Esophagus muscularis mucosa (tissue), 4 donors: ENCODE measurements at regions of chr6 and their contacts with region 1.

Region 1: DNA sequence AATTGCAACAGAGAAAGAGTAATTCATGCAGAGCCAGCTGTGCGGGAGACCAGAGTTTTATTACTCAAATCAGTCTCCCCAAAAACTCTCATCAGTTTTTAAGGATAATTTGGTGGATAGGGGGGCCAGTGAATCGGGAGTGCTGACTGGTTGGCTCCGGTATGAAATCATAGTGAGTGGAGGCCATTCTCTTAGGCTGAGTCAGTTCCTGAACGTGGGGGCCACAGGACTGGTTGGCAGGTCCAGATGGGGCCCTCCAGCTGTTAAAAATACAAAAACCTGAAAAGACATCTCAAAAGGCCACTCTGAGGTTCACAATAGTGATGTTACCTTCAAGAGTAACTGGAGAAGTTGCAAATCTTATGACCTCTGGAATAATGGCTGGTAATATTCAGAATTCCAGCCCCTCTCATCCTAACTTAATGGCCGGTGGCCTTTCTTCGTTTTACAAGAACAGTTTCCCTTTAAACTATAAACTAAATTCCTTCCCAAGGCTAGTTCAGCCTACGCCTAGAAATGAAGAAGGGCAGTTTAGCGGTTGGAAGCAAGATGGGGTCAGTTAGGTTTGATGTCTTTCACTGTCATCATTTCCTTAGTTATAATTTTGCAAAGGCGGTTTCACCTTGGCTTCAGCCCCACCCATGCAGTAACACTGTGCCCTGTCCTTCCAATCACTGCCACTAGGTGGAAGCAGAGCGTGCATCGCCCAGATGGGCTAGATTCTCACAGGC is 6.8 kb upstream of the MICA start:
- DNase-seq: no peak
- H3K4me3 ChIP-seq: peak overlapping the region in 1 of 4 donors; percentile 5
- H3K27ac ChIP-seq: no peak overlapping the region
- H3K4me1 ChIP-seq: peaks cover 22 to 36% (median 33%) of the 10 kb centered on the region in 4 donors
- H3K27me3 ChIP-seq: no peaks in the 10 kb centered on the region
- CTCF ChIP-seq: peak; percentile 96 to 98 (median 96)
- EP300 ChIP-seq: no peak
- POLR2A ChIP-seq: no peak

Region 2: GRCh38 chr6:31441365-31442267 is 45.0 kb after region 1 on chr6:
- intact Hi-C with region 1: loop called (anchors 2 kb)
- DNase-seq: peak; percentile 96
- H3K4me3 ChIP-seq: peak overlapping the region in 3 of 4 donors; percentile 19 to 47 (median 23)
- H3K27ac ChIP-seq: no peak overlapping the region
- H3K4me1 ChIP-seq: peaks cover 8 to 11% (median 9%) of the 10 kb centered on the region in 4 donors
- H3K27me3 ChIP-seq: peaks cover 0 to 3% (median 0%) of the 10 kb centered on the region in 4 donors
- CTCF ChIP-seq: peak; percentile 75 to 92 (median 79)
- EP300 ChIP-seq: no peak
- POLR2A ChIP-seq: no peak